ENCODE measurements at regions of chr12 and their contacts with region 1.

Region 1: DNA sequence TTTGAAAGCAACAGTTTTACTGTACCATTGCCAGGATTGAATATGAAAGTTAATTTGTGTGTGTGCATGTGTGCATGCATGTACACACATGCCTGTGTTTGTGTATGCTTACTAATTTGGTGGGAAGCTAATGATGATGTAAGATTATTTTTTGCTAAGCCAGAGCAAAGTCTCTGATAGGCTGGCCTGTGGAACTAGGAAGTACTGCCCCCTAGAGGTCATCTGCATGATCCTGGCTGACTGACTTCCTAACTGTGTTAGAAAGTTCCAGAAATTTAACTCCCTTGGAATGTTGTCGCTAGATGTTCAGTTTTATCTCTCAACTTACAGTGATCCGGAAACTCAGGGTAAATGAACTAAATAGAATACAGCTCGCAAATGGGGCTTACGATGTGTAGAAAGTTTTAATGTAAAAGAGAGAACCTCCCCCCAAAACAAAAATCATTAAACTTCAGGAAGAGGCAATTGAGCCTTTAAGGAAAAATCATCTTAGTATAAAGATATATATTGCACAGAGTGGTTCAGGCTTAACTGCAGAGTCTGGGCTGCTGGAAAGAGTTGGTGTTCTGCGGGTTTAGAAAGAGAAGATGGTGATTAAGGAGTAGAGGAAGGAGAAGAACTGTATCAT is 34.3 kb upstream of the SLC38A1 start:
- DNase-seq: peak in 1 of 2 donors; percentile 21
- ATAC-seq: peak in 4 of 8 donors; percentile 59 to 65 (median 62)
- H3K4me3 ChIP-seq: no peak overlapping the region
- H3K27ac ChIP-seq: no peak overlapping the region
- H3K4me1 ChIP-seq: peaks cover 0 to 31% (median 20%) of the 10 kb centered on the region in 9 donors
- H3K27me3 ChIP-seq: no peaks in the 10 kb centered on the region
- CTCF ChIP-seq: peak; percentile 26 to 69 (median 61)

Region 2: DNA sequence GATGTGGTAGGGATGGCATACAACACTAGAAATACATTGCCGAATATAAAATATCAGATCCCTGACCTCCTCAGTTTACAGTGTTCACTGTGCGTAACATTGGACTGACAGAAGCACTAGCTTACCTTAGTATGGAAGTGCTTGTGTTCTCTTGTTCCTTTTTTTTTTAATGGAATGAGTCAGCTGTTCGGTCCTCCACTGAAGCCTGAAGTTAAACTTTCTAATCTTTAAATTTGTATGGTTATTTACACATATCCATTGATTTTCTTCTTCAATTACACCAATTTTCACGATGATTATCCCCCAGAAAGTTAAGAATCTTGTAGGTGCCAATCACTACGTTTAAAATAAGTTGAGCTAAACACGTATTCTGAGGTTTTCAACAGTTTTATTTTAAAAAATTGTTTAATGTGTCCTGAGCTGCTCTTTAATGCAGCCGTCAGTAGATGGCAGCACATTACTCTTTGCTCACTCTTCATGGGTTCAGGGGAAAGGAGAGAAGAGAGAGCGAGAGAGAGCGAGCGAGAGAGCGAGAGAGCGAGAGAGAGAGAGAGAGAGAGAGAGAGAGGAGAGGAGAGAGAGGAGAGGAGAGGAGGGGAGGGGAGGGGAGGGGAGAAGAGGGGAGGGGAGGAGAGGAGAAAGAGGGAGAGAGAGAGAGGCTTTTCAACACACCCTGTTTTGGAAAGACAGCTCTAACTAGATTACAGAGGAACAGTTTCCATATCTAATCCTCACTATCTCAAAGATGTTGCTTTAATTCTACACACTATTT is 178.1 kb before region 1 on chr12:
- intact Hi-C with region 1: loop called in 4 of 10 experiments (anchors 5 to 10 kb)
- DNase-seq: peak in 1 of 2 donors; percentile 65
- ATAC-seq: peak; percentile 85 to 94 (median 88)
- H3K4me3 ChIP-seq: peak overlapping the region in 3 of 10 donors; percentile 13 to 19 (median 17)
- H3K27ac ChIP-seq: no peak overlapping the region
- H3K4me1 ChIP-seq: peaks cover 0 to 14% (median 5%) of the 10 kb centered on the region in 9 donors
- H3K27me3 ChIP-seq: no peaks in the 10 kb centered on the region
- CTCF ChIP-seq: peak; percentile 37 to 81 (median 58)

Region 3: DNA sequence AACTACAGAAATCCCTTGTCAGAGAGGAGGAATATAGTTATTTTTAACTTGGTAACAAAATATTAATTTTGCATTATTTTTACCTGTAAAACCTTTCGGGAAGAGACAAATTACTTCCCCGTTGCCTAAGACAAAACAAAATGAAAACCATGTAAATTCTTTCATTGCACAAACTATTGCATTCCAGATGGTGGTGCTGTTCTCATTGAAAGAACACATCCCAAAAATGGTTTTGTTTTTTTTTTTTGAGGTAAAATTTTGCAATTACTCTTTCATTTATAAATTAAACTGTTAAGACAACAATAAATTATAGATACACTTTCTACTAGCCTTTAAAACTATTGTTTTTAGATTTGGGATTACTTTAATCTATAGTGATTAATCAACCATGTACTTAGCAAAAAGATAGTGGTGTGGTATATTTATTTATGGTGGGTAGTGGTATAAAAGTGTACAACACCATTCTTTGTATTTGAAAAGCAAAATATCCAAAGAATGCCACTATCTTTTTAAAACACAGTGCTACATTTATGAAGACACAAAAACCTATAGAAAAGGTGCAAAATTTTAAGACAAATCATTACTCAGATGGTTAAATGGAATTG is 149.8 kb before region 1 on chr12:
- intact Hi-C with region 1: loop called in 5 of 10 experiments (anchors 5 to 10 kb)
- DNase-seq: no peak
- ATAC-seq: no peak
- H3K4me3 ChIP-seq: no peak overlapping the region
- H3K27ac ChIP-seq: no peak overlapping the region
- H3K4me1 ChIP-seq: peaks cover 0 to 12% (median 0%) of the 10 kb centered on the region in 9 donors
- H3K27me3 ChIP-seq: no peaks in the 10 kb centered on the region
- CTCF ChIP-seq: peak; percentile 10 to 71 (median 61)

Region 4: GRCh38 chr12:46174061-46174662 is 129.0 kb before region 1 on chr12:
- intact Hi-C with region 1: no loop called
- DNase-seq: no peak
- ATAC-seq: no peak
- H3K4me3 ChIP-seq: no peak overlapping the region
- H3K27ac ChIP-seq: no peak overlapping the region
- H3K4me1 ChIP-seq: peaks cover 0 to 6% (median 0%) of the 10 kb centered on the region in 9 donors
- H3K27me3 ChIP-seq: no peaks in the 10 kb centered on the region
- CTCF ChIP-seq: no peak

Region 5: DNA sequence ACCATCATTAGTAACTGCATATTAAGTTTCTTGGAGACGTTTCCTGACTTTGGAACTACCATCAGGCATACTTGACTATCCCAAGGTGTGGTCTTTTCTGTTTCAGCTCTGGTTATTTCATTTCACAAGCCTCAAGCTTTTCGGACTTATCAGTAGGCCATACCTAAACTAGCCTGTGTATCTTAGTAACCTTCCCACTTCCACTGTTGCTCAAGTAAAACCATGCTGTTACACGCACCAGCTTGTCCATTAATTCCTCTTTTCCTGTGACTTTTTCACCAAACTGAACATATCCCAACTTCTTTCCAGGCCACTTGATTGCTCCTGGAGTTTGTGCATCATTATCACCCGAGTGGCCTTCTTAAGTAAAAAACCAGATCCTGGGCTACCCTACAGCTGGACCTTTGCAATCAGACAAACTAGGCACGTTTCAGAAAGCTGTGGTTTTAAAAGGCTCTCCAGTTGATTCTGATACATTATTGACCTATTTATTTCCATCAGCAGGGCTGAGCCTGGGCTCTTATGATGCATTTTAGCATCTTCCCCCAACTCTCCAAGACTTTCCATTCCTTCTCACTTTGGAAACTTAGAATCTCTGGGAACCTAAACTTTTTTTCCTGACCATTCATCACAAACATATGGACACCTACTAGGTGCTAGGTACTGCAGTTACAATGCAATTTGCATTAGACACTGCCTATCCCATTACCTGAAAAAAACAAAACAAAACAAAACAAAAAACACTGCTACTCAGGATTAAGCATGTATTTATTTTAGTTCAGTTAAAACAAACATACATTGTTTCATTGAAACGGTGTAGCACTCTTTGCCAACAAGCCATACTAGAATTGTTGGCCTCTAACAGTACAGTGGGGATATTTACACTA is 54.5 kb after region 1 on chr12:
- intact Hi-C with region 1: no loop called
- DNase-seq: no peak
- ATAC-seq: peak in 6 of 8 donors; percentile 17 to 49 (median 30)
- H3K4me3 ChIP-seq: no peak overlapping the region
- H3K27ac ChIP-seq: no peak overlapping the region
- H3K4me1 ChIP-seq: peaks cover 0 to 36% (median 3%) of the 10 kb centered on the region in 9 donors
- H3K27me3 ChIP-seq: no peaks in the 10 kb centered on the region
- CTCF ChIP-seq: no peak